ENCODE measurements at regions of chr4 and their contacts with region 1.

Region 1: DNA sequence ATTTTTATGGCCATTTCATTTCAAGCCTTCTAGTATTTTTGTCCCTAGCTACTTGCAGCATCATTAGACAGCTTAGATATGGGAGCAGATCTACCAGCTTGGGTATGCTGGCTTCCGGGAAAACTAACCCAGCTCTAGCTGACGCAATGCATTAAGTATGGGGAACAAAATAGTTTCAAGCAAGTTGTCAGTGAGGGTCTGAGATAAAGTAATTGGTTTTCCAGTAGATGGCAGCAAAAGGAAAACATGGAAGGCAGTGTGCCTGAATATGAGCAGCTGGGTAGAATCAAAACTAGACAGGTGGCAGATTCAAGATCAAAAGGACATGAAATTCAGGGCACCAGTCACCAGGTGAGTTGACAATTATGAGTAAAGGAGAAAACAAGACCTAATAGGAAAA is 340.9 kb upstream of the CTSO start:
- DNase-seq: no peak
- ATAC-seq: peak in 1 of 2 donors; percentile 74

Region 2: DNA sequence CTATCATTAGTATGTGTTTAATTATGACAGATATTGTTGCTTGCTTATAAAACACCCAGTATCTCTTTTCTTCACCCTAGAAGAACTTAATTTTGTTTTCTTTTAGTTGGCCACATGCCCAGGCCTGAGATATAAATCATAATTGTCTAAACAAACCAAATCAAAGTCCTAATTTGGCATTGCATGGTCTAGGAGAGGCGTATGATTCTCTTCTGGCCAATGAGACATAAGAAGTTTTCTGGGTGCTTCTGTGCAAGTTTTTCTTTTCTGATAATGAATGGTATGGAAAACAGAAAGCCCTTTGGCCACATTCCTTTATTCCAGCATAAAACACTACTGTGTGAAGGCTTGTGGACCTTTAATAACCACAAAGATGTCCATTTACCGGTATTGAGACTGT is 148.0 kb before region 1 on chr4:
- intact Hi-C with region 1: no loop called
- DNase-seq: no peak
- ATAC-seq: no peak

Region 3: GRCh38 chr4:156941940-156942548 is 647.5 kb after region 1 on chr4:
- intact Hi-C with region 1: loop called in 1 of 2 experiments (anchors 10 kb)
- DNase-seq: peak; percentile 33
- ATAC-seq: peak; percentile 51 to 75